Adrenal gland (tissue), 19 donors: ENCODE measurements at regions of chr3 and their contacts with region 1.

Region 1: DNA sequence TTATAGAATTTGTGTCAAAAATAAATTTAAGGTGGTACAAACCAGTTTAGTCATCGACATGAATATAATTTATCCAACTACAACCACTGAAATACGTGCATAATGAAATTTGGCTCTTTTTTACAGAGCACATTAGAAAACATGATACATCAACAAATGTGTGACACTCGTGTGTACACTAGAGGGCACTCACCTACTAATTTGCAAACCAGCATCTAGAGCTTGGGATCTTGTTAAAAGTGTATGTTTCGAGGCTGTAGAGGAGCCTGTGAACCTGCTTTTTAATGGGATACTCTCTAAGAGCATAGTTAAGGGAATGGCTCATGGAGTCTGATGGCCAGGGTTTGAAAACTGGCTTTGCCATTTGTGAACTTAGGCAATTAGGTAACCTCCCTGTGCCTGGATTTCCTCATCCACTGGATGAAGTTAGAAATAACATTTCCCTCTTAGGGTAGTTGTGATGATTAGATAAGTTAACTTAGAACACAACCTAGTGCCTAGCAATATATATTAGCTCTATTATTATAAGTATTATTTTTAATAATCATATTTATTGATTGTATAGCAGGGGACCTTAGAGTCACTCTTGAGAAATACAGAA is 8.8 kb upstream of the CPOX start:
- DNase-seq: peak; percentile 26 to 71 (median 48)
- H3K4me3 ChIP-seq: no peak overlapping the region
- H3K27ac ChIP-seq: no peak overlapping the region
- H3K4me1 ChIP-seq: peaks cover 0 to 9% of the 10 kb centered on the region in 2 donors
- H3K27me3 ChIP-seq: no peaks in the 10 kb centered on the region
- CTCF ChIP-seq: peak; percentile 56 to 77 (median 72)
- POLR2A ChIP-seq: no peak

Region 2: DNA sequence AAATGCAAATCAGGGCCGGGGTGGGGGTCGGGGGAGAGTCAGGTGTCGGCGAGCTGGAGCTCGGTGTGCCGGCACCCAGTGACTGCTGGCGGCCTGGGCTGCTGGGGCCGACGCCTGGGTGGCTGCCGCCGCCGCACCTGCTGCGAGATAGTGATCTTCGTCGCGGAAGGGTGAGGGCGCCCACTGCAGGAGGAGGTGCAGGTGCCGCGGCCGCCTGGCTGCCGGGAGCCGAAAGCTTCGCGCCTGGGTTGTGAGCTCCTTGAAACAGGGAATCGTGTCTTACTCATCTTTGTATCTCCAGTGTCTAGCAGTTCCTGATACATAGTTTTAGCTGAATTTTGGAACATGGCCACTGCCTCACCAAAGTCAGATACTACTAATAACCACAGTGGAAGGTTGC is 55.3 kb after region 1 on chr3:
- intact Hi-C with region 1: no loop called
- DNase-seq: no peak
- H3K4me3 ChIP-seq: peak overlapping the region in 1 of 4 donors; percentile 28
- H3K27ac ChIP-seq: no peak overlapping the region
- H3K4me1 ChIP-seq: no peaks in the 10 kb centered on the region
- H3K27me3 ChIP-seq: no peaks in the 10 kb centered on the region
- CTCF ChIP-seq: no peak
- POLR2A ChIP-seq: no peak

Region 3: DNA sequence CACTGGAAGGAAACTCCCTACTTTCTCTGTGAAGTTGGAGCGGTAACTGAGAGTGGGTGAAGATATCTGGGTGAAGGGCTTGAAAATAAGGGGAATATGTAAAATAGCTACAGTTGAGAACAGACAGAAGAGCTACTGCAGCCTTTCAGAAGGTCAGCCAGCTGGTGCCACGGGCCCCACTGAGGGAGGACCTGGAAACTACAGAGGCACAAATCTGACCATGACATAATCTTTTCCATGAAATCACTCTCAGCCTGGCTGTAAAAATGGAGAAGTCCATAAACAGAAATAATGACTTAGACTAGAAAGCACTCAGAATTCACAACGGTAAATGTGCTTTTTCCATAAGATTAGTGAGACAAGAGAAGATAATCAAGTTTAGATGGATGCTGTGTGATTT is 207.4 kb after region 1 on chr3:
- intact Hi-C with region 1: loop called (anchors 5 kb)
- DNase-seq: peak in 4 of 7 donors; percentile 9 to 30 (median 24)
- H3K4me3 ChIP-seq: no peak overlapping the region
- H3K27ac ChIP-seq: no peak overlapping the region
- H3K4me1 ChIP-seq: peaks cover 0 to 5% of the 10 kb centered on the region in 2 donors
- H3K27me3 ChIP-seq: no peaks in the 10 kb centered on the region
- CTCF ChIP-seq: no peak
- POLR2A ChIP-seq: no peak

Region 4: DNA sequence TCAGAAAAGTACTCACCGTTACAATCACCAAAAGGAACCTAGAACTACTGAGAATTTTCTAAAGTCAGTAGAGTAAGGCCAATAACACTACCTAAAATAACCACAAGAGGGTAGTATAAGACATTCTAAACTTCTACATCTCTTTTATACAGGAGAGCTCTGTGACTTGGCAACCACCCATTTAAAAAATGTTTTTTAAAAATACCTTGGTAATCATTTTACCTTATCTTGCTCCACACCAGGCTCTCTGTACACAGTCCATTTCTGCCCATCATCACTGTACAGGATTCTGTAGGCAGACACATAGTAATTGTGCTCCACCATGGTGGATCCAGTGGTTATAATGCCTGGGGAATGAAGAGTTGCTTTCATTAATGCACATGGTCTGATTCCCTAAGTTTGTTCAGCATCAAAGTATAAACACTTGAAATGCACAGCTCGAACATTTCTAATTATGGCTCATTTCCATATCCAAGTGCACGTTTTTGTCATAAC is 215.4 kb after region 1 on chr3:
- intact Hi-C with region 1: loop called in 1 of 2 experiments (anchors 5 kb)
- DNase-seq: no peak
- H3K4me3 ChIP-seq: no peak overlapping the region
- H3K27ac ChIP-seq: no peak overlapping the region
- H3K4me1 ChIP-seq: no peaks in the 10 kb centered on the region
- H3K27me3 ChIP-seq: no peaks in the 10 kb centered on the region
- CTCF ChIP-seq: peak; percentile 69 to 89 (median 84)
- POLR2A ChIP-seq: no peak